Body of pancreas (tissue), 4 donors: ENCODE measurements at regions of chr22 and their contacts with region 1.

Region 1: DNA sequence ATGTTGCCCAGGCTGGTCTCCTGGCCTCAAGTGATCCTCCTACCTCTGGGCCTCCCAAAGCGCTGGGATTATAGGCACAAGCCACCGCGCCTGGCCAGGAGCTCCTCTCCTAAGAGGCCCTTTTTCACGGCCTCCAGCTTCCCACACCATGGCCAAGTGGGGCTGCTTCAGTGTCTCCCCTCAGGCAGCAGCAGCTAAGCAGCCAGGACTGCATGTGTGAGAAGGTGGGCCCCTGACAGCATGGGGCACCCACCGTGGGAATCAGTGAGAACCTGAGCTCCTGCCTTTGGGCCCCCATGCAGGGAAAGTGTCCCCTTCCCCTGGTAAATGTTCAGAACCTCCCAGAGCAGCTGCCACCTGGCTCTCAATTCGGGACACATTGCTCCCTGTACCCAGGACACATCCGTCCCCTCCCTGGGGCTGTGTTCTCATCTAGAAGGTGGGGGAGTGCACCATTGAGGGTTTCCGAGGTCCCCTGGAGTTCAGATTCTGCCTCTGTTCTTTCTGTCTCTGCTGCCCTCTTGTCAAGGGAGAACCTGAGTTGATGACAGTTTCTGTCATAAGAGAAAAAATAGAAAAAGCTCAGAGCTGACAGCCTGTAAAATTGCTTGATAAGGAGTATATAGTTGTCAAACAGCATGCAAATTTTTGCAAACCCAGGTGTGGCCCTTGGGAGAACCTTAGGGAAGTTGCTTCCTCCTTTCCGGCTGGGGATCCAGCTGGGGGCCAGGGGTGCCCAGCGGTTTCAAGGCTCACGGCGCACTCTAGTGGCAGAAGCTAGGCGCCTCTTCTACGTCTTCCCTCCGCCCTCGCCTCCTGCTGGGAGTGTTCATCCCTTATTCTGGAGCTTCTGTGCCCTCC is 29.7 kb downstream of the FAM83F start:
- DNase-seq: peak; percentile 62 to 75 (median 68)
- ATAC-seq: peak; percentile 76
- H3K4me3 ChIP-seq: no peak overlapping the region
- H3K27ac ChIP-seq: no peak overlapping the region
- H3K4me1 ChIP-seq: no peaks in the 10 kb centered on the region
- H3K27me3 ChIP-seq: no peaks in the 10 kb centered on the region
- CTCF ChIP-seq: peak; percentile 49 to 83 (median 72)
- POLR2A ChIP-seq: no peak

Region 2: DNA sequence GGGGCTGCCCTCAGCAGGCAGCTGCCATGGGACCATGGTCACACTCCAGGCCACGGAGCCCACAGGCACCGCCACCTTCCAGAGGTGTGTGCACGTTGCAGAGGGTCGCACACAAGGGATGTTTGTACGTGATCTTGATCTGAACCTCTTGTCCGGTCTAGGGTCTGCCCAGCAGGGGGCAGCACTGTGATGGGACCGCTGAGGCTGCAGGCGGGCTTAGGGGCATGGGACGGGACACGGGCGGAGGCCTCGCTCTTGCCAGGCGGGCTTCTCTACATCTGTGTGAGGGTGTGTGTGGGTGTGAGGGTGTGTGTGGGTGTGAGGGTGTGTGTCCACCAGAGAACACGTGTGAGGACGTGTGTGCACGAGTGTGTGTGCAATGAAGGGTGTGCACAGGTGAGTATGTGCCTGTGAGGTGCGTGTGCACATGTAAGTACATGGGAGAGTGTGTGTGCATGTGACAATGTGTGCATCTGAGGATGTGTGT is 401.5 kb before region 1 on chr22:
- intact Hi-C with region 1: no loop called
- DNase-seq: peak; percentile 47 to 66 (median 56)
- ATAC-seq: peak; percentile 51
- H3K4me3 ChIP-seq: no peak overlapping the region
- H3K27ac ChIP-seq: no peak overlapping the region
- H3K4me1 ChIP-seq: no peaks in the 10 kb centered on the region
- H3K27me3 ChIP-seq: peaks cover 0 to 5% of the 10 kb centered on the region in 2 donors
- CTCF ChIP-seq: peak; percentile 18 to 56 (median 36)
- POLR2A ChIP-seq: no peak

Region 3: DNA sequence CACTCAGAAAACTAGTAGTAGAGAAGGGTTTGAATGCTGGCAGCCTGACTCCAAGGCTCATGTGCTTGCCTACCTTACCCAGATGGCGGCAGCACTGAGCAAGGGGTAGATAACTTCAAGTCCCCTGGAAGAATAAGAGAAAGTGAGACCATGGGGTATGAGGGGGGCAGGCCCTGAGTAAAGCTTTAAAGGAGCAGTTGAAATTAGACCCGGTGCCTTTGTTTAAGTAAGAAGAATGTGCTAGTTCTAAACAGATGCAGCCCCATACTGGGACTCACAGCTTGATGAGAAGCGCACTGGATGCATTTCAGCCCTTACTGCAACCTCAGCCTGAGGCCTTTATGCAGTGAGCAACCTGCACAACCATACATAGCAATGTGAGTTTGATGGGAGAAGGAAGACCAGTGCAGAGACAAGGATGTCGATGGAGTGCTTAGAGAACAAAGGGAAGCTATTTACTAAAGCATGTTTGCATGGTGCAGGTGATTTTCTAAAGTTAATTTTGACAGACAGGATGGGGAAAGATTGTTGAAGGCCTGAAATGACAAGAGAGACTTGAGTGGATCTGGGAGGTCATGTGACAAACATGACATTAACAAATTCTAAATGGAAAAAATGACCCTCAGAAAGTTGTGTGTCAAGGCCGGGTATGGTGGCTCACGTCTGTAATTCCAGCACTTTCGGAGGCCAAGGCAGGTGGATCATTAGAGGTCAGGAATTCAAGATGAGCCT is 91.3 kb before region 1 on chr22:
- intact Hi-C with region 1: loop called (anchors 5 kb)
- DNase-seq: peak; percentile 39 to 60 (median 48)
- ATAC-seq: no peak
- H3K4me3 ChIP-seq: no peak overlapping the region
- H3K27ac ChIP-seq: no peak overlapping the region
- H3K4me1 ChIP-seq: no peaks in the 10 kb centered on the region
- H3K27me3 ChIP-seq: no peaks in the 10 kb centered on the region
- CTCF ChIP-seq: peak; percentile 30 to 66 (median 60)
- POLR2A ChIP-seq: no peak

Region 4: GRCh38 chr22:40334899-40335298 is 310.5 kb after region 1 on chr22:
- intact Hi-C with region 1: no loop called
- DNase-seq: no peak
- ATAC-seq: no peak
- H3K4me3 ChIP-seq: no peak overlapping the region
- H3K27ac ChIP-seq: no peak overlapping the region
- H3K4me1 ChIP-seq: no peaks in the 10 kb centered on the region
- H3K27me3 ChIP-seq: no peaks in the 10 kb centered on the region
- CTCF ChIP-seq: no peak
- POLR2A ChIP-seq: no peak

Region 5: GRCh38 chr22:40426594-40427333 is 402.3 kb after region 1 on chr22:
- intact Hi-C with region 1: no loop called
- DNase-seq: peak in 1 of 4 donors; percentile 55
- ATAC-seq: peak; percentile 62
- H3K4me3 ChIP-seq: no peak overlapping the region
- H3K27ac ChIP-seq: peak overlapping the region in 2 of 4 donors; percentile 45 to 49
- H3K4me1 ChIP-seq: peaks cover 7% of the 10 kb centered on the region
- H3K27me3 ChIP-seq: no peaks in the 10 kb centered on the region
- CTCF ChIP-seq: no peak
- POLR2A ChIP-seq: no peak